Left ventricle myocardium superior (tissue), 1 donor: ENCODE measurements at regions of chr7 and their contacts with region 1.

Region 1: DNA sequence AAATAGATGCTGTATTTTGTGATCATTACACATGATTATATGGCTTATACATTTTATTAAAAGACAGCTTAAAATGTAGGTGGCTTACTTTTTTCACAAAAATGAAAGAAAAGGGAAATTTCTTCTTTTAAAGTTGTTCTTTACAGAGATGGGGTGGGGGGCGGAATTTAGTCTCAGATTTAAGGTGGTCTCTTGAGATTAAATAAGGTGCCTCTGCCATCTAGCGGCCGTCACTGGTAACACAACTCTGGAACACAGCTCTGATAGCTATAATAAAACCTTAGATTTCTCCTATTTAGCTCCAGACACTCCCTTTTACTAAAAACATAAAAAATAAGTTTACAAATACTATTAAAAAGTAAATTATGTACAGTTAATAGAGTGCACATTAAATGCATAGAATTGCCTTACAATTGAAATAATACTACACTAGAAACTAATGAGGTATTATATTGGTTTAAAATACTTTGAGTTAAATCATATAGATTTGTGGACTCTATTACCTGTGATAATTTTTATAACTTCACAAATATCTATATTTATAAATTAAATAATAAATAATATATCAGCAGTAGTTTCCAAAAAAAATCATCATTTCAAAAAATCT is 210.9 kb downstream of the DGKB start:
- DNase-seq: peak; percentile 44
- ATAC-seq: no peak

Region 2: GRCh38 chr7:13279854-13280435 is 1411.8 kb before region 1 on chr7:
- intact Hi-C with region 1: loop called (anchors 5 kb)
- DNase-seq: no peak
- ATAC-seq: no peak